ENCODE measurements at regions of chr16 and their contacts with region 1.

Region 1: GRCh38 chr16:30407102-30407803 is at the start of gene ZNF771:
- DNase-seq: peak; percentile 76 to 85 (median 81)
- H3K4me3 ChIP-seq: peak within 1 kb of the TSS; percentile 42 to 65
- H3K4me3 Mint-ChIP-seq: peak within 1 kb of the TSS; percentile 91 to 100 (median 97)
- H3K27ac ChIP-seq: peak within 1 kb of the TSS; percentile 59
- H3K27ac Mint-ChIP-seq: peak within 1 kb of the TSS; percentile 88 to 95 (median 93)
- H3K4me1 ChIP-seq: peaks cover 24% of the 10 kb centered on the region
- H3K4me1 Mint-ChIP-seq: peaks cover 19 to 33% (median 24%) of the 10 kb centered on the region in 4 donors
- H3K27me3 ChIP-seq: no peaks in the 10 kb centered on the region
- H3K27me3 Mint-ChIP-seq: no peaks in the 10 kb centered on the region
- total RNA-seq, gene ZNF771: 6.0 to 6.5 TPM

Region 2: GRCh38 chr16:29983420-29984136 is 423.7 kb before region 1 on chr16:
- CTCF ChIA-PET with region 1: no interaction called
- POLR2A ChIA-PET with region 1: no interaction called
- intact Hi-C with region 1: no loop called
- DNase-seq: no peak
- H3K4me3 ChIP-seq: no peak overlapping the region
- H3K4me3 Mint-ChIP-seq: no peak overlapping the region
- H3K27ac ChIP-seq: no peak overlapping the region
- H3K27ac Mint-ChIP-seq: peak overlapping the region in 2 of 7 donors; percentile 23 to 70
- H3K4me1 ChIP-seq: no peaks in the 10 kb centered on the region
- H3K4me1 Mint-ChIP-seq: no peaks in the 10 kb centered on the region
- H3K27me3 ChIP-seq: no peaks in the 10 kb centered on the region
- H3K27me3 Mint-ChIP-seq: no peaks in the 10 kb centered on the region

Region 3: GRCh38 chr16:30041846-30042267 is 365.4 kb before region 1 on chr16:
- CTCF ChIA-PET with region 1: no interaction called
- POLR2A ChIA-PET with region 1: interaction called, 4 read pairs
- intact Hi-C with region 1: loop called (anchors 1 kb)
- DNase-seq: peak in 3 of 5 donors; percentile 26 to 39 (median 38)
- H3K4me3 ChIP-seq: no peak overlapping the region
- H3K4me3 Mint-ChIP-seq: no peak overlapping the region
- H3K27ac ChIP-seq: no peak overlapping the region
- H3K27ac Mint-ChIP-seq: no peak overlapping the region
- H3K4me1 ChIP-seq: no peaks in the 10 kb centered on the region
- H3K4me1 Mint-ChIP-seq: peaks cover 0 to 5% (median 2%) of the 10 kb centered on the region in 4 donors
- H3K27me3 ChIP-seq: no peaks in the 10 kb centered on the region
- H3K27me3 Mint-ChIP-seq: peaks cover 0 to 5% of the 10 kb centered on the region in 2 donors

Region 4: DNA sequence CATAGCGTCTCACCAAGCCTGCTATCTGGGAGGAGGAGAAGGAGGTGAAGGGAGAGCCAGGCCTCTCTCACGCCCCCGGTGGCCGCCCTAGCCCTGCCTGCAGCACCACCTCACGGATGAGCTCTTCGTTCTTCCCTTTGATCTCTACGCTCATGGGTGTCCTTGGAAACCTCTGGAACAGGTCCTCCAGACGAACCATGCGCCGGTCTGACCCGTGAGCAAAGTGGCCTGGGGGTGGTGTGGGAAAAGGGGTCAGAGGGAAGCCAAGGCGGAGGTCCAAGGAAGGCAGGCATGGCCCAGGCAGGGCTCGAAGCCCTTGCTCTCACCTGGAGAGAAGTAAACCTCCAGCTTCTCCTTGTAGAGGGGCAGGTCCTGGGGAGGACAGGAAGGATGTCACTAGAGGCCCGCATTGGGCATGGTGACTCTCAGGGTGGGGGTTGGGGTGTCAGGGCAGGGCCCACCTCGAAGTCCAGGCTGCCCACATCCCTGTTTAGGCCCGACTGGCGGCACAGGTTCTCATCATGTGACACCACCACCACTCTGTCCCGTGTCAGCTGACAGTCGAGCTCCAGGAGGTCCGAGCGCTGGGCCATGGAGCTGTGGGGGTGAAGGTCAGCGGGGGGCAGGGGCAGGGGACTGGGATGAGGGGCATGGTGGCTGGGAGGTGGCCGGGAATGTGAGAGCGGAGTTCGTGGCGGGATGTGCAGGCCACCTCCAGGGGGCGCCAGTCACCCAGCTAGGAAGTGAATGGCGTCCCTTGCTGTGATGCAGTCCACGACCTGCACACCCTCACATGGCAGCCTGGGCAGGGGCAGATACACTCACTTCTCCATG is 294.8 kb before region 1 on chr16:
- CTCF ChIA-PET with region 1: interaction called, 11 read pairs
- POLR2A ChIA-PET with region 1: interaction called, 5 read pairs
- intact Hi-C with region 1: no loop called
- DNase-seq: peak in 2 of 5 donors; percentile 35 to 45
- H3K4me3 ChIP-seq: no peak overlapping the region
- H3K4me3 Mint-ChIP-seq: peak overlapping the region in 1 of 8 donors; percentile 10
- H3K27ac ChIP-seq: no peak overlapping the region
- H3K27ac Mint-ChIP-seq: peak overlapping the region in 2 of 7 donors; percentile 35 to 66
- H3K4me1 ChIP-seq: peaks cover 27% of the 10 kb centered on the region
- H3K4me1 Mint-ChIP-seq: peaks cover 11 to 25% (median 17%) of the 10 kb centered on the region in 4 donors
- H3K27me3 ChIP-seq: no peaks in the 10 kb centered on the region
- H3K27me3 Mint-ChIP-seq: no peaks in the 10 kb centered on the region

Region 5: DNA sequence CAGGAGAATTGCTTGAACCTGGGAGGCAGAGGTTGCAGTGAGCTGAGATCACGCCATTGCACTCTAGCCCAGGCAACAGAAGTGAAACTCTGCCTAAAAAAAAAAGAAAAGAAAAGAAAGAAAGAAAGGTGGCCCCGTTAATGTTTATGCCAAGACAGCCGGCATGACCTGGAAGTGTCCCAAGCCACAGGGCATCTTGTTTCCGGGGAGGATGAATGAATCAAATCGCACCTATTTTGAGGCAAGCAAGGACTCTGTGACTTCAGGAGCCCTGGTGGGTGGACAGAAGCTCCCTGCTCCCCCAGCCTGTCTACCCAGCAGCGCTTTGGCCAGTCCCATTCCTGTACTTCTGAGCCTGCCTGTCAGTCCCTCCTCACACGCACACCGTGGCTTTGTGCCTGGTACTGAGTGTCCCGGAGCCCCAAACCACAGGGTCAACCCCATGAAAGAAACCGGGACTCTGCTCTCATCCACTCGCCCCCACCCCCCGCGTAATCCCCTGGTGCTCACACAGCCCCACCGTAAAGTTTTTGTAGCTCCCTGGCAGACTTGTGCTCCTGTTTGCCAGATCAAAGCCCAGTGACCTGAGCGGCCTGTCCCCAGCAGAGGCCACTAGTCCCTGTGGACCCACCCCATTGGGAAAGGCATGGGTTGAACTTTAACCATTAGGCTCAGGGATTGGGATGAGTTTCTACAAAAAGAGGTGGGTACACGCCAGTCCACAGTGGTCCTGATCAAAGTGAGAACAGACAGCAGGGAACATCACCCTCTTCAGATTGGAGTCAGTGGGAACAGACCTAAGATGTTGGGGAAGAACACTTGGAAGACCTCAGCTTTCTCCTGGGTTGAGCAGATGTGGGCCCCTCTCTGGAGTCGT is 71.4 kb before region 1 on chr16:
- CTCF ChIA-PET with region 1: interaction called, 10 read pairs
- POLR2A ChIA-PET with region 1: interaction called, 5 read pairs
- intact Hi-C with region 1: loop called (anchors 5 kb)
- DNase-seq: peak in 1 of 5 donors; percentile 62
- H3K4me3 ChIP-seq: peak overlapping the region in 1 of 2 donors; percentile 47
- H3K4me3 Mint-ChIP-seq: peak overlapping the region; percentile 81 to 92 (median 86)
- H3K27ac ChIP-seq: peak overlapping the region; percentile 67
- H3K27ac Mint-ChIP-seq: peak overlapping the region; percentile 85 to 96 (median 90)
- H3K4me1 ChIP-seq: peaks cover 9% of the 10 kb centered on the region
- H3K4me1 Mint-ChIP-seq: peaks cover 8 to 31% (median 18%) of the 10 kb centered on the region in 4 donors
- H3K27me3 ChIP-seq: no peaks in the 10 kb centered on the region
- H3K27me3 Mint-ChIP-seq: no peaks in the 10 kb centered on the region

Region 6: GRCh38 chr16:30378236-30379204 is 28.7 kb before region 1 on chr16:
- CTCF ChIA-PET with region 1: interaction called, 21 read pairs
- POLR2A ChIA-PET with region 1: interaction called, 540 read pairs
- intact Hi-C with region 1: loop called (anchors 1 kb)
- DNase-seq: peak; percentile 98 to 99 (median 99)
- H3K4me3 ChIP-seq: peak overlapping the region; percentile 84 to 91
- H3K4me3 Mint-ChIP-seq: peak overlapping the region; percentile 91 to 100 (median 96)
- H3K27ac ChIP-seq: peak overlapping the region; percentile 96
- H3K27ac Mint-ChIP-seq: peak overlapping the region; percentile 97 to 100 (median 100)
- H3K4me1 ChIP-seq: peaks cover 69% of the 10 kb centered on the region
- H3K4me1 Mint-ChIP-seq: peaks cover 32 to 71% (median 48%) of the 10 kb centered on the region in 4 donors
- H3K27me3 ChIP-seq: no peaks in the 10 kb centered on the region
- H3K27me3 Mint-ChIP-seq: no peaks in the 10 kb centered on the region

Region 7: DNA sequence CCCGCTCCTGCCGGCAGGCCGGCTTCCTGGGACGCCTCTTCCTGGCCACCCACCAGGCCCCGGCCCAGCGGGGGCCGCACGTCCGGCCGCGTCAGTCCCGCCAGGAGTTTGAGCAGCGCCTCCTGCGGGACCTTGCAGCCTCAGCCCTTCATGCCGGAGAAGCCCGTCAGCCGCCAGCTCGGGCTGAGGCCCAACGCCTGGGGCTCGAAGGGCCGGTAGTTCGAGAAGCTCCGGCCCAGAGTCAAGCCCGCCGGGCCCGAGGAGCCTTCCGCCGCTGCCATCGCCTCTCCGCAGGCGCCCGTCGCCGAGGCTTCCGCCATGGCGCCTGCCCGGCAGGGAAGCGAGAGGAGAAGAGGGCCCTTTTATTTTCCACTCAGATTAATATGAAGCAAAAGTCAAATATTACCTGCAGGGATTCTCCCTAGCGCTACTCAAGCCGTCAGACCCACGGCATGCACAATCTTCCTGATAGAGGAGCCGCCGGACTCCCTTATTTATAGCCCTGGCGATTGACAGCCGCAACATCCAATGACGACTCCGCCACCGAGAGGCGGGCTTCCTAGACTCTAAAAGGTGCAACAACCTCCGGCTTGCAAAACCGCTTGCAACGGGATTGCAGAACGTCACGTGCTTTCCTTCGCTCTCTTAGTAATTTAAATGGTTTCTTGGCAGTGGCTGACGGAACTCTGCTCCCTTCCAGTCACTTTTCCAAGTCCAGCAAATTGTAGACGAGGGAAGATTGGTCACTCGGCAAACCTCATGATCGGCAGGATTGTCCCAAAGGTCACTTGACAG is 38.4 kb after region 1 on chr16 and contains the start of gene SEPHS2:
- CTCF ChIA-PET with region 1: no interaction called
- POLR2A ChIA-PET with region 1: no interaction called
- intact Hi-C with region 1: no loop called
- DNase-seq: peak; percentile 93 to 98 (median 94)
- H3K4me3 ChIP-seq: peak within 1 kb of the TSS; percentile 92 to 94
- H3K4me3 Mint-ChIP-seq: peak within 1 kb of the TSS; percentile 89 to 98 (median 96)
- H3K27ac ChIP-seq: peak within 1 kb of the TSS; percentile 96
- H3K27ac Mint-ChIP-seq: peak within 1 kb of the TSS; percentile 87 to 98 (median 96)
- H3K4me1 ChIP-seq: peaks cover 42% of the 10 kb centered on the region
- H3K4me1 Mint-ChIP-seq: peaks cover 24 to 44% (median 36%) of the 10 kb centered on the region in 4 donors
- H3K27me3 ChIP-seq: no peaks in the 10 kb centered on the region
- H3K27me3 Mint-ChIP-seq: no peaks in the 10 kb centered on the region
- total RNA-seq, gene SEPHS2: 42.0 to 44.4 TPM

Region 8: GRCh38 chr16:30628627-30629540 is 221.6 kb after region 1 on chr16:
- CTCF ChIA-PET with region 1: interaction called, 17 read pairs
- POLR2A ChIA-PET with region 1: no interaction called
- intact Hi-C with region 1: no loop called
- DNase-seq: peak; percentile 72 to 83 (median 80)
- H3K4me3 ChIP-seq: peak overlapping the region in 1 of 2 donors; percentile 48
- H3K4me3 Mint-ChIP-seq: peak overlapping the region; percentile 67 to 86 (median 78)
- H3K27ac ChIP-seq: no peak overlapping the region
- H3K27ac Mint-ChIP-seq: peak overlapping the region; percentile 38 to 95 (median 87)
- H3K4me1 ChIP-seq: peaks cover 9% of the 10 kb centered on the region
- H3K4me1 Mint-ChIP-seq: peaks cover 4 to 9% (median 7%) of the 10 kb centered on the region in 4 donors
- H3K27me3 ChIP-seq: no peaks in the 10 kb centered on the region
- H3K27me3 Mint-ChIP-seq: peaks cover 0 to under 1% of the 10 kb centered on the region in 2 donors

Measured in CD4-positive, alpha-beta memory T cell (primary cell).